Activated CD4-positive, alpha-beta memory T cell treated with anti-CD3 and anti-CD28 coated beads for 36 hours (primary cell): ENCODE measurements at regions of chr6 and their contacts with region 1.

Region 1: GRCh38 chr6:158220786-158221442 is 52.8 kb downstream of the GTF2H5 start:
- DNase-seq: peak; percentile 86
- H3K4me3 Mint-ChIP-seq: no peak overlapping the region
- H3K27ac Mint-ChIP-seq: no peak overlapping the region
- H3K4me1 Mint-ChIP-seq: no peaks in the 10 kb centered on the region
- H3K27me3 Mint-ChIP-seq: no peaks in the 10 kb centered on the region

Region 2: DNA sequence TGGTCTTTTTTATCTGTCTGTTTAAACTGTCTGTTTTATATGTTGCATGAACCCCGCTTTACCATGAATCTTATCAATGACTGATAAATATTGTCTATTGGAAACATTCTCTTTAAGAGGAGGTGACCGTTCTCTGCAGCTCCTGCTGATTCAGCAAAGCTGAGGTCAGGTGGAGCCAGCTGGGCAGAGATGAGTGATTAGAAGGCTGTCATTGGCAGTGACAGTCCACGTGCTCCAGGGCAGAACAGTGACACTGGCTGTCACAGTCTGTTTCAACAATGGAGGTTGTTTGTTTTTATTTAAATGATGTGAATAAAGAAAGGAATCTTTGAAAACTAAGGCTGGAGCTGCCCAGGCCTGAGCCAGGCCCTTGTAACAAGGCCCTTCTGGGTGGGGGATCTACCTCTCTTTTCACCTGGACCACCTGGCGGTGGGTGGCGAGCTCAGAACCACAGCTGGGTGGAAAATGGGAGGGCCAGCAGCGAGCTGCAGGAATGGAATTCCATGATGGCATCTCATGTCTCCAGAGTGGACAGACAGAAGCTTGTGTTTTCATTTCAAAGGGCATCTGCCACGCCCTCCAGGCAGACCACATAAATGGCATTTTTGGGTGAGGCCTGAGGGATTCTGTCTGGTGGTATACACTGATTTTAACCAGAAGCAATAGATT is 226.7 kb before region 1 on chr6:
- CTCF ChIA-PET with region 1: no interaction called
- POLR2A ChIA-PET with region 1: no interaction called
- intact Hi-C with region 1: no loop called
- DNase-seq: no peak
- H3K4me3 Mint-ChIP-seq: no peak overlapping the region
- H3K27ac Mint-ChIP-seq: no peak overlapping the region
- H3K4me1 Mint-ChIP-seq: peaks cover 38% of the 10 kb centered on the region
- H3K27me3 Mint-ChIP-seq: no peaks in the 10 kb centered on the region

Region 3: DNA sequence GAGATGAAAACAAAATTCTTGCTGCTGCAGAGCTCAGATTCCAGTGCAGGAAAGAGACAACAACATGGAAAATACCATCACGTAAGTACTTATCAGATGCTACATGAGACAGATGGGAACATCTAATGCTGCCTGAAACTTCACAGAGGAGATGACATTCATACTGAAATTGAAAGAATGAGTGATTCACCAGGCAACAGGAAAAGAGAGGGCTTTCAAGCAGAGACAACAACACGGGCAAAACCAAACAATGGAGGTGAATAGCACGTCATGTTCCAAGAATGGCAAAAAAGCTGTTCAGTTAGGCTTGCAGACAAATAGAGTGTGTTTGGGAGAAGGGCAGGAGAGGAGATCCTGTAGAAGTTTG is 13.5 kb before region 1 on chr6:
- CTCF ChIA-PET with region 1: interaction called, 28 read pairs
- POLR2A ChIA-PET with region 1: interaction called, 3 read pairs
- intact Hi-C with region 1: no loop called
- DNase-seq: peak; percentile 59
- H3K4me3 Mint-ChIP-seq: peak overlapping the region; percentile 30
- H3K27ac Mint-ChIP-seq: peak overlapping the region; percentile 87
- H3K4me1 Mint-ChIP-seq: peaks cover 30% of the 10 kb centered on the region
- H3K27me3 Mint-ChIP-seq: no peaks in the 10 kb centered on the region

Region 4: GRCh38 chr6:158387036-158387435 is 166.1 kb after region 1 on chr6:
- CTCF ChIA-PET with region 1: interaction called, 9 read pairs
- POLR2A ChIA-PET with region 1: no interaction called
- intact Hi-C with region 1: loop called (anchors 5 kb)
- DNase-seq: no peak
- H3K4me3 Mint-ChIP-seq: no peak overlapping the region
- H3K27ac Mint-ChIP-seq: no peak overlapping the region
- H3K4me1 Mint-ChIP-seq: no peaks in the 10 kb centered on the region
- H3K27me3 Mint-ChIP-seq: no peaks in the 10 kb centered on the region

Region 5: DNA sequence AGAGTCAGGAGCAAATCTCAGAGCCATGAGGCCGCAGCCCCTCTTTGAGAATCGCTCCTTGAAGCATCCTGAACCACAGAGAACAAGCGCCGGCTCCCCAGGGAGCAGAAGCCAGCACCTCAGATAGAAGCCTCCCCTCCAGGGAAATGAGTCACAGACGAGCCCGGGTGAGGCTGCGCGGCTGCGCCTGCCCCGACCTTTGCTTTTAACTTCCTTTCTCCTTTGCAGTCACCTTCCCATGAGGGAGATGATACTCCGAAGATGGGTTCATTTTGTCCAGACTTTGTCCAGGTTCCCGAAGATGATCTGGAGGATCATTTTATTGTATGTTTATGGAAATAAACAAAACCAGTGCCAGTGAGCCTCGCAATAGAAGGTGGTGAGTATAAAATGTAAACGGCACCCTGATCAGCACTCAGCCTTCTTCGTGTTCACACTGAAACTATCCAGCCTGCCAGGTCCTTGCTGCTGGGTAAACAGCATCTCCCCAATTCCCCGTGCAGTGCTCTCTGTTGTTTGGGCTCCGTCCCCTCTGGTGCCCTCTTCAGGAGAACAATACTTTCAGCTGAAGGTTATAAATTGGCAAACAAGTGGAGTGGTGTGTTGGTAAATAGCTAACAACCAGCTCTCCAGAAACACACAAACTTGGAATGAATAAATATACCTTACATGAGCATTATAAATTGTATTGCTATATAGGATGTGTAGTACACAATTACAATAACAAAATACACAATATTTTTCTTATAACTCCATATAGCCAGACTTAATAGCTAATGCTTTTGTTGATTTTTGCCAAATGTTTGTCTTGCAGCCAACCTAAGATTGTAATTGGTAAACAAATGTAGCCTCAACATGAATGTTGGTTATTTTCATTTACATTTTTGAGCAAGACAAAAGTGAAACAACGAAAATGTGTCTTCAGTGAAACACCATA is 297.5 kb after region 1 on chr6:
- CTCF ChIA-PET with region 1: interaction called, 25 read pairs
- POLR2A ChIA-PET with region 1: no interaction called
- intact Hi-C with region 1: loop called (anchors 1 kb)
- DNase-seq: peak; percentile 75
- H3K4me3 Mint-ChIP-seq: peak overlapping the region; percentile 85
- H3K27ac Mint-ChIP-seq: peak overlapping the region; percentile 83
- H3K4me1 Mint-ChIP-seq: peaks cover 25% of the 10 kb centered on the region
- H3K27me3 Mint-ChIP-seq: peaks cover 6% of the 10 kb centered on the region

Region 6: DNA sequence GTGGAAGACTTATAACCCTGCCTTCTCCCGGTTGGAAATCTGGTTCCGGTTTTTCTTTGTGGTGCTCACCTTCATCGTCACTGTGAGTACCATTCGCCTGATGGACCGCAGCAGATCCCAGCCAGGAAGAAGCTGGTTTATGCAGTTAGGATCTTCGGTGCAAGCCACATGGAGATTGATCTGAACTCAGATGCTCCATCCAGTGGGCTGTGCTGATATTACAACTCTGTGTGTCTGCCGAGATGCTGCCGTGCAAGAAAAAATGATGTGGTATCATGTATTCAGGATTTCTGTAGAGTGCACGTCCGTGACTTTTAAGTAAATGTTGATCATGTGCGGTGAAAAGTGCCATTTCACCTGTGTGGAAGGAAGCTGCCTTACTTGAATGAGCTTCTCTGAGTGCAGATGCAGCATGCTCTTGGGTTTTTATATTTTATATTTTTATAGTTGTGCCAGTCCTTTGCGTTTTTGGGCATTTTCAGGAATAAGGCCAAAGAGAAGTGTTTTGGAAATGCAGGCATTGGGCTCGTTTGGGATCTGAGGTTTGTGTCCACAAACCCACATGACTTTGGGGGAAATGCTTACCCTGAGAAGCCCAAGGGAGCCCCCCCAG is 384.5 kb after region 1 on chr6:
- CTCF ChIA-PET with region 1: interaction called, 24 read pairs
- POLR2A ChIA-PET with region 1: no interaction called
- intact Hi-C with region 1: loop called (anchors 1 kb)
- DNase-seq: peak; percentile 70
- H3K4me3 Mint-ChIP-seq: no peak overlapping the region
- H3K27ac Mint-ChIP-seq: no peak overlapping the region
- H3K4me1 Mint-ChIP-seq: no peaks in the 10 kb centered on the region
- H3K27me3 Mint-ChIP-seq: no peaks in the 10 kb centered on the region